Activated CD8-positive, alpha-beta T cell treated with anti-CD3 and anti-CD28 coated beads, Interleukin-2, amount 10 ng/mL, durations not matched to agents 7 days and 5 days (primary cell): ENCODE measurements at regions of chr10 and their contacts with region 1.

Region 1: DNA sequence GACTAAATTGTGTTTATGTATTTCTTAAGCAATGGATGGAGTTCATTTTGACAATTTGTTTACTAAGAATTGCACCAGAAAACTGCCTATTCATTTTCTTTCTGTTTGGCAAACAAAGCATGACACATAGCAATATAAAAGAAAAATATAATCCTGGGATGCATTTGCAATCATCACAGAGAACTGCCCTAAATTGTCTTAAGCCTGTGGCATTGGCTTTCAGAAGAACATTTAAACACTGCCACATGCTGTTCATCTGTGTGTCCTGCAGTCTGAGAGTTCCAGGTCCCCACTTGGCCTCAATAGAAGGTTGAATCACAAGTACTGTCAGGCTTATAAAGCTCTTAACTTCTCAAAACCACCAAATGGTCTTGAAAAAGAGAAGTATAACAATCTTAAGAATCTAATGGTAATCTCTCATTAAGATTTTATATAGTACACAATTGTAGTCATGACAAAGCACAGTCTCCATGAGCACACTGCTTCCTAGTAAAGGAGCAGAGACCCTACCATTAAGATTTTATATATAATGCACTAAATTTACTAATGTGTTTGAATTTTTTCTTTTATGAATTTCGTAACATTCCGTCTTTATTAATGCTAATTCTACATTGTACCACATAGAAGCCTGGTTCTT is 29.9 kb downstream of the RNLS start:
- DNase-seq: peak; percentile 64
- ATAC-seq: peak; percentile 79
- H3K4me3 Mint-ChIP-seq: no peak overlapping the region
- H3K27ac Mint-ChIP-seq: no peak overlapping the region
- H3K4me1 Mint-ChIP-seq: no peaks in the 10 kb centered on the region
- H3K27me3 Mint-ChIP-seq: no peaks in the 10 kb centered on the region

Region 2: DNA sequence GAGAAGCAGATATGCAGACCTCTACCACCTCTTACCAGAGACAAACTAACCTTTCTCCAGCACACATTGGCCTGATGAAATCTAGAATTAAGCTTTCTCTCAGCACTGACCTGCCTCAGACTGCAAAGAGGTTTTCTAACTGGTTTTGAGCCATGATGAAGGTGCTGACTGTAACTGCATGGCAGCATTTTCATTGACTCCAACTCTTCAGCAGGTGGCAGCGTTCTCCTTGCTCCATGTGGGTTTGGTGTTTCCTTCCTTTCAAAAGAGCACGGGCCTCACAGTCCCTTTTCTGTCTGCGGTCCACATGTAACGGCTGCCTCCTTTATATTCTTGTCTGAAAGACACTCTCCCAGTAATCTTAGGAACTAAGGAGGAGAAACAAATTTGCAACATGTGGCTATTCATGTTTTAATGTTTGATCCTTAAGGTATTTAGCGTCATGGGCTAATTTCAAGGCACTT is 702.5 kb before region 1 on chr10:
- CTCF ChIA-PET with region 1: interaction called, 55 read pairs
- POLR2A ChIA-PET with region 1: no interaction called
- DNase-seq: peak; percentile 74
- ATAC-seq: peak; percentile 94
- H3K4me3 Mint-ChIP-seq: no peak overlapping the region
- H3K27ac Mint-ChIP-seq: no peak overlapping the region
- H3K4me1 Mint-ChIP-seq: peaks cover 22% of the 10 kb centered on the region
- H3K27me3 Mint-ChIP-seq: no peaks in the 10 kb centered on the region

Region 3: GRCh38 chr10:88528806-88529570 is 24.2 kb before region 1 on chr10:
- CTCF ChIA-PET with region 1: no interaction called
- POLR2A ChIA-PET with region 1: no interaction called
- DNase-seq: no peak
- ATAC-seq: no peak
- H3K4me3 Mint-ChIP-seq: no peak overlapping the region
- H3K27ac Mint-ChIP-seq: no peak overlapping the region
- H3K4me1 Mint-ChIP-seq: no peaks in the 10 kb centered on the region
- H3K27me3 Mint-ChIP-seq: peaks cover 12% of the 10 kb centered on the region

Region 4: DNA sequence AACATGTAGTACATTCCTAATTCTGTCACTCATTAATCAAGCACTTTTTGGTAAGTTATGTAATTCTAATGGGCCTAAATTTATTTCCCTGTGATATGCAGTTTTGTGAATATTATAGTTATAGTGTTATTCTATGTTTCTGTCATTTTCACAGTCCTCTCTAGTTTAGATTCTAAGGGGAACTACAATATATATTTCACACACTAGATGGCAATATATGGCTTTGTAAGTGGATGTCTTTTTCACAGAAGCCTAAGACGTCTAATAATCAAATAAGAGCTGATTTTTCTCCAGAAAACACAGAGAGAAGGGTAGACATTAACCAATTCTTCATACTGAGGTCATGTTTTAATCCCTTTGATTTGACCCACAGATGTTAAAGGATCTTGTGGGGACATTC is 11.8 kb after region 1 on chr10:
- CTCF ChIA-PET with region 1: interaction called, 29 read pairs
- POLR2A ChIA-PET with region 1: no interaction called
- DNase-seq: no peak
- ATAC-seq: peak; percentile 47
- H3K4me3 Mint-ChIP-seq: no peak overlapping the region
- H3K27ac Mint-ChIP-seq: no peak overlapping the region
- H3K4me1 Mint-ChIP-seq: no peaks in the 10 kb centered on the region
- H3K27me3 Mint-ChIP-seq: peaks cover 13% of the 10 kb centered on the region

Region 5: GRCh38 chr10:88865281-88865876 is 312.1 kb after region 1 on chr10:
- CTCF ChIA-PET with region 1: no interaction called
- POLR2A ChIA-PET with region 1: no interaction called
- DNase-seq: no peak
- ATAC-seq: no peak
- H3K4me3 Mint-ChIP-seq: no peak overlapping the region
- H3K27ac Mint-ChIP-seq: no peak overlapping the region
- H3K4me1 Mint-ChIP-seq: peaks cover 2% of the 10 kb centered on the region
- H3K27me3 Mint-ChIP-seq: peaks cover 3% of the 10 kb centered on the region